GM10248 (cell line): ENCODE measurements at regions of chr5 and their contacts with region 1.

Region 1: GRCh38 chr5:116626272-116626723 is 51.7 kb upstream of the SEMA6A start:
- DNase-seq: no peak
- CTCF ChIP-seq: no peak

Region 2: DNA sequence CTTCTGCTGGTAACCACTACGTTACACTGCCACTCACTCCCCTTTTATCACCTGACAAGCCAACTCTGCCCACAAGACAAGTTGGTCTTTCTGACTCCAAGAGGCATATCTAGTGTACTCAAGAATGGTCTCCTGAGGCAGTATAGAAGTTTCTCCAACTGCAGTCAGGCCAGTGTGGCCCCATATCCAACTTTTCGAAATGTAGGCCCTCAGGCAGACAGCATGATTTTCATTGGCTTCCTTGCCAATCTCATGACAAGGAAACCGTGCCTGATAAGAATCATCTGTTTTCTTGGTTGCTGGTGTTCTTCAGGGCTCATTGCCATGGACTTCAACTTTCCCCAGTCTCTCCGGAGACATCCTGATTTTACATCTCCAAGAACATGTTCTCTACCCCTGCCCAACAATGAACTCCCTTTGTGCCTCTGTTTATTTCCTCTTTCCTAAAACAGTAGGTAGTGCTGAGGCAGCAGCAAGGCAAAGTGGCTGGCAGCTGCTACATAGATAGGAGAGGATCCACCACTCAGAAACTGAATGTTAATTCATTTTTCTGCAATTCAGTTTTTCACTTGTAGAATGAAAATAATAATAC is 10.9 kb after region 1 on chr5:
- CTCF ChIA-PET with region 1: interaction called, 13 read pairs
- POLR2A ChIA-PET with region 1: no interaction called
- DNase-seq: no peak
- CTCF ChIP-seq: no peak

Region 3: DNA sequence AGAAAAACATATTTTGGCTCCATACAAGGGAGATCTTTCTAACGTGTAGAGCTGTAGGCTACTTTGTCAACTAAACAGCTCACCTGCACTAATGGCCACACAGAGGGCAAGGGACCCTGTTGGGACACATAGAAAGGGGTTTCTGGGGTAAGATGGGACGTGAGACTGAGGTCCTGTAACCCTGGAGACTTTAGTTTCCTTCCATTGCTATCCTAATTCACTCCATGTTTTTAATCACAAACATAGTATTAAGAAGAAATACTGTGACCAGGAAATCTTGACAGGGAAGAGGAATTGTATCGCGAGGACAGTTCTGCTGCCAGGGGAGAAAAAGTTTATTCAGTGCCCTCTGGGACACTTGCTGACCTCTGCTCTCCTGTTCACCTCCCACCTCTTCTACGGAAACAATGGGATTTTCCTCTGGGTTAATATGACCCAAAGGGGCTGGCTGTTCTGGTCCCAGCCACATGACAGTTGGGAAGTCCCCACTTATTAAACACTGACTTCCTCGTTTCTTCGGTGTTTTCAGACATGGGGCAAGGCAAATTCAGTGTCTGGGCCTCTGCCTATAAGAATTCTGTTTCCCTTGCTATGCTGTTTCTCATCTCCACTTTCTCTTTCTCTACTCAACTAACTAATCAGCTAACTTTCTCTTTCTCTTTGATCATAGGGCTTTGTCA is 55.2 kb after region 1 on chr5:
- CTCF ChIA-PET with region 1: no interaction called
- POLR2A ChIA-PET with region 1: no interaction called
- DNase-seq: peak; percentile 77
- CTCF ChIP-seq: no peak